PC-9 (cell line): ENCODE measurements at regions of chr10 and their contacts with region 1.

Region 1: GRCh38 chr10:89278034-89278535 is 23.8 kb upstream of the IFIT2 start:
- DNase-seq: peak; percentile 69 to 96
- H3K4me3 ChIP-seq: no peak overlapping the region; the same call in 1 of the 2 replicates
- H3K27ac ChIP-seq: peak overlapping the region; percentile 100
- H3K4me1 ChIP-seq: peaks cover 88% of the 10 kb centered on the region
- H3K27me3 ChIP-seq: no peaks in the 10 kb centered on the region
- CTCF ChIP-seq: no peak

Region 2: GRCh38 chr10:89262086-89263051 is 15.7 kb before region 1 on chr10:
- CTCF ChIA-PET with region 1: no interaction called
- POLR2A ChIA-PET with region 1: no interaction called
- intact Hi-C with region 1: loop called (anchors 1 kb)
- DNase-seq: peak; percentile 45 to 96
- H3K4me3 ChIP-seq: peak overlapping the region; percentile 20; the same call in 1 of the 2 replicates
- H3K27ac ChIP-seq: peak overlapping the region; percentile 95
- H3K4me1 ChIP-seq: peaks cover 43% of the 10 kb centered on the region
- H3K27me3 ChIP-seq: no peaks in the 10 kb centered on the region
- CTCF ChIP-seq: no peak

Region 3: DNA sequence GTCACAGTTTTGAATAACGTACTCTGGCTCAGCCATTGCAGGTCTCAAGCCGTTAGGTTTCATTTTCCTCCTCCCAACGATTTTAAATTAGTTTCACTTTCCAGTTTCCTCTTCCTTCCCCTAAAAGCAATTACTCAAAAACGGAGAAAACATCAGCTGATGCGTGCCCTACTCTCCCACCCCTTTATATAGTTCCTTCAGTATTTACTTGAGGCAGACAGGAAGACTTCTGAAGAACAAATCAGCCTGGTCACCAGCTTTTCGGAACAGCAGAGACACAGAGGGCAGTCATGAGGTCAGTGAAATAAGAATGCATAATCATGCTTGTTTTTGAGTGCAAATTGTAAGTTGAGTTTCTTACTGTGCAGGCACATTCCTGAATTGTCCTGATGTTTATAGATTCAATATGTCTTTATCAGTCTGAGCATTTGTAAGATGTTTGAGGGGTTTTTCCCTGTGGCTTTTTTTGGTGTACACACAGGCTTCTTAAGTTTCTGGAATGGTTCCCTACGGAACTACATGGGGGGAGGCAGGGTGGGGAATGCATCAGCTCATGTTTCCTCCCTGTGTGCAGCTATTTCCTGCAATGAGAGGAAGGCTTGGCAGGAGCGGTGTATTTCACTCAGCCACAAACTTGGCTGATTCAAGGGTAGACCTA is 49.8 kb after region 1 on chr10 and contains the start of gene IFIT3:
- CTCF ChIA-PET with region 1: interaction called, 3 read pairs
- POLR2A ChIA-PET with region 1: no interaction called
- intact Hi-C with region 1: loop called (anchors 2 kb)
- DNase-seq: peak; percentile 36 to 70
- H3K4me3 ChIP-seq: peak within 1 kb of the TSS; percentile 70
- H3K27ac ChIP-seq: peak within 1 kb of the TSS; percentile 96
- H3K4me1 ChIP-seq: peaks cover 23% of the 10 kb centered on the region
- H3K27me3 ChIP-seq: no peaks in the 10 kb centered on the region
- CTCF ChIP-seq: no peak
- total RNA-seq, gene IFIT3: 6.2 and 7.2 TPM in 2 replicates

Region 4: GRCh38 chr10:89351780-89352597 is 73.9 kb after region 1 on chr10:
- CTCF ChIA-PET with region 1: no interaction called
- POLR2A ChIA-PET with region 1: interaction called, 8 read pairs
- intact Hi-C with region 1: loop called (anchors 1 kb)
- DNase-seq: peak; percentile 76 to 95
- H3K4me3 ChIP-seq: peak overlapping the region; percentile 32; the same call in 1 of the 2 replicates
- H3K27ac ChIP-seq: peak overlapping the region; percentile 100
- H3K4me1 ChIP-seq: peaks cover 37% of the 10 kb centered on the region
- H3K27me3 ChIP-seq: no peaks in the 10 kb centered on the region
- CTCF ChIP-seq: no peak

Region 5: DNA sequence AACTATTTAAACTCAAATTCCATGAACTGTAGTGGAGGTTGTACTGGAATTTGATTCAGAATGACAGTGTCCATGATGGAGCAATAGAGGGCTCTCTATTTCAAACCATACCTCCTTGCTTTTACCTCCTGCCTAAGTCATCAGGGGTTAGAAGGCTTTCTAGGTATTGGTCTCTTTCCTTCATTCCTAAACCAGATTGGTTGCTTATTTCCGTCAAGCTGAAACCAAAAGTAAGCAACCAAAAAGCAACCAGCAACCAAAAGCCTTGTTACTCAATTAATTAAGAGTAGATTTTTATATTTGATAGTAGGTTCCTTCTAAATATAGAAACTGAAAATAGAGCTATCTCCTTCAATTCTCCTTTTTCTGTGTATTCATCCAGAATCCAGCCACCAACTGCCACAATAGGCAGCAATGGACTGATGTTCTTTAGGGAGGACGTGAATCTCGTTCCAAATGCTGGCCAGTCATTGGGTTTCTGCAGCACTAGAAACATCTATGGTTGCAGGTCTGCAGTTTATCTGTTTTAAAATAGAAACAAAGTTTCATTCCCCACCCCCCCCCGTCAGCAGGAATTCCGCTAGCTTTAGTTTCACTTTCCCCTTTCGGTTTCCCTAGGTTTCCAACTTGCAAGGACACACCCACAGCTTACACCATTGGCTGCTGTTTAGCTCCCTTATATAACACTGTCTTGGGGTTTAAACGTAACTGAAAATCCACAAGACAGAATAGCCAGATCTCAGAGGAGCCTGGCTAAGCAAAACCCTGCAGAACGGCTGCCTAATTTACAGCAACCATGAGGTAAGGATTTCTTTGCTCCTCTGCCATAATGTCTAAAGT is 114.1 kb after region 1 on chr10 and contains the start of gene IFIT1:
- CTCF ChIA-PET with region 1: no interaction called
- POLR2A ChIA-PET with region 1: interaction called, 11 read pairs
- intact Hi-C with region 1: no loop called
- DNase-seq: peak in 1 of 2 experiments; percentile 60
- H3K4me3 ChIP-seq: peak within 1 kb of the TSS; percentile 56
- H3K27ac ChIP-seq: peak within 1 kb of the TSS; percentile 61
- H3K4me1 ChIP-seq: peaks cover 7% of the 10 kb centered on the region
- H3K27me3 ChIP-seq: no peaks in the 10 kb centered on the region
- CTCF ChIP-seq: no peak
- total RNA-seq, gene IFIT1: 3.4 TPM in 2 replicates